A549 (cell line): ENCODE measurements at regions of chr10 and their contacts with region 1.

Region 1: GRCh38 chr10:4825851-4826665 is at the start of gene AKR1E2:
- DNase-seq: peak; percentile 98 to 99
- ATAC-seq: peak; percentile 96 to 98
- H3K4me3 ChIP-seq: peak within 1 kb of the TSS; percentile 77
- H3K27ac ChIP-seq: peak within 1 kb of the TSS; percentile 93 to 96
- H3K4me1 ChIP-seq: peaks cover 33% of the 10 kb centered on the region; the same call in 2 of the 3 replicates
- CTCF ChIP-seq: no peak
- EP300 ChIP-seq: no peak
- POLR2A ChIP-seq: peak; percentile 77
- RAD21 ChIP-seq: no peak
- polyA plus RNA-seq, gene AKR1E2: 17.5 and 20.0 TPM in 2 replicates

Region 2: DNA sequence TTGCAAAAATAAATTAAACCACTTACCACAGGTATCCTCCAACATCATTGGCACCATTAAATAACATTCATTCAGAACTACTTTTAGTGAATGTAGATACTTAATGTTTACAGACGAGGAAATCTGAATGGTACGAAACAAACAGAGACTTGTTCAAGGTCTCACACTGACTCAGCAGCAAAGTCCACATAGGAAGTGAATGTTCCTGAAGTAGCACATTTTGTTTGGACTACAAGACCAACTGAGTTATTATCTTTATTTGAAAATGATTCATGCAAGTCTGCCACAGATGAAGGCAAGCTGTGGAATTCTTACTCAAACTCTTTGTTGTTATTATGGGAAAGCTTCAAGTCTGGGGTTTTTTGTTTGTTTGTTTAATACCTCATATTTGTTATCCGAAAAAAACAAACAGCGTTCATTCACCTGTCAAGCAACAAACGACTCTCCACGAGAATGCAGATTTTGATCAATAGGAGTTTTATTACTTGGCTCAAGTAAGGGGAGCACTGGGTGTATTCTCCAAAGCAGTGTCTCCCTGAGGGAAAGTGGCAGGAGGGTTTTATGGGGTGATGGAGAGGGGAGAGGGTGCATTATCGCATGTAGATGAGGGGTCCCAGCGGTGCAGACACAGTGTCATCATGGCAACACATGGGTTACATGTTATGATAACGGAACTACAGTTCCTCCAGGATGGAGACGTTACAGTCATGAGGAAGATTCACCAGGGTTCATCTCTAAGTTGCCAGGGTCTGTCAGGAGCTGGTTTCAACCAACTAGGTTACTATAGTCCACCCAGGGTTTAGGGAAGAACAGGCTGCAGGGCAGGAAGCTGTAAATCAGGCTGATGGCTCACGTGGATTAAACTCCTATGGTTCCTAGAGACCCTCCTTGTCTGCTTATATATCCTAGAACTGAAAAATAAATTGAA is 147.8 kb before region 1 on chr10:
- CTCF ChIA-PET with region 1: no interaction called
- POLR2A ChIA-PET with region 1: no interaction called
- DNase-seq: peak; percentile 28 to 93
- ATAC-seq: peak; percentile 88 to 94
- H3K4me3 ChIP-seq: peak overlapping the region; percentile 5; the same call in 1 of the 3 replicates
- H3K27ac ChIP-seq: peak overlapping the region; percentile 86 to 87
- H3K4me1 ChIP-seq: peaks cover 46% of the 10 kb centered on the region
- CTCF ChIP-seq: no peak
- EP300 ChIP-seq: peak in 1 of 2 experiments; percentile 46; a peak in 2 of 5 replicates
- POLR2A ChIP-seq: no peak
- RAD21 ChIP-seq: no peak

Region 3: DNA sequence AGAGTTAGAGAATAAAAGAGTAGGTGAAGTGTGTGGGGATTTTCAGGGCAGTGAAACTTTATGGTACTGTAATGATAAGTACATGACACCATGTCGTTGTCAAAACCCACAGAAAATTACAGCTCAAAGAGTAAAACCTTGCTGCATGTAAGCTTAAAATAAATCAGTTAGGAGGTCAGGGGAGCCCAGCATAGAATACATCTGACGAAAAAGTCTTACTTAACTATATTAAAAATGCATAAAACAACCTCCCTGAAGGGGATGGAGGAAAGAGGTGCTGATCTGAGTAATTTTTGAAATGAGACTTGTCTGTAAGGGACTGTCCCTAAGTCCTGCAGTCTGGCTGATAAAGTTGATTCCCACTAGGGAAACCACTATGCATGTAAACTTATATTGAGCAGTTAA is 49.8 kb before region 1 on chr10:
- CTCF ChIA-PET with region 1: no interaction called
- POLR2A ChIA-PET with region 1: no interaction called
- DNase-seq: no peak
- ATAC-seq: peak in 1 of 2 experiments; percentile 35; a peak in 3 of 6 replicates
- H3K4me3 ChIP-seq: no peak overlapping the region
- H3K27ac ChIP-seq: peak overlapping the region; percentile 43 to 66
- H3K4me1 ChIP-seq: peaks cover 19% of the 10 kb centered on the region; the same call in 2 of the 3 replicates
- CTCF ChIP-seq: no peak
- EP300 ChIP-seq: no peak
- POLR2A ChIP-seq: no peak
- RAD21 ChIP-seq: no peak

Region 4: DNA sequence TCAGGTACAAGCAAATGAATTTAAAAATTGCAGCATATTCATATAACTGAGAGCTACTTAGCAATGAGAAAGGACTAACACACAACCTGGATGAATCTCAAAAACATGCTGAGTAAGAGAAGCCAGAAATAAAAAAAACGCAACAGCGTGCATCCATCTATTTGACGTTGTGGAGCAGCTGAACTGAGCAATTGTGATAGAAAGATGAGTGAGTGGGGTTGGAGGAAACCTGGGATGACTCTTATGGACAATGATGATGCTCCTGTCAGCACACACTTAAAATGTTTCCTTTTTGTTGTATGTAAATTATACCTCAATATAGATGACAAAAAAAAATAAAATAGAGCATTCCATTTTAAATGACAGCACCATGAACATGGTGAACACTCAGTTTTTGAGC is 36.0 kb before region 1 on chr10:
- CTCF ChIA-PET with region 1: no interaction called
- POLR2A ChIA-PET with region 1: no interaction called
- DNase-seq: no peak
- ATAC-seq: no peak
- H3K4me3 ChIP-seq: no peak overlapping the region
- H3K27ac ChIP-seq: no peak overlapping the region
- H3K4me1 ChIP-seq: no peaks in the 10 kb centered on the region
- CTCF ChIP-seq: no peak
- EP300 ChIP-seq: no peak
- POLR2A ChIP-seq: no peak
- RAD21 ChIP-seq: no peak

Region 5: DNA sequence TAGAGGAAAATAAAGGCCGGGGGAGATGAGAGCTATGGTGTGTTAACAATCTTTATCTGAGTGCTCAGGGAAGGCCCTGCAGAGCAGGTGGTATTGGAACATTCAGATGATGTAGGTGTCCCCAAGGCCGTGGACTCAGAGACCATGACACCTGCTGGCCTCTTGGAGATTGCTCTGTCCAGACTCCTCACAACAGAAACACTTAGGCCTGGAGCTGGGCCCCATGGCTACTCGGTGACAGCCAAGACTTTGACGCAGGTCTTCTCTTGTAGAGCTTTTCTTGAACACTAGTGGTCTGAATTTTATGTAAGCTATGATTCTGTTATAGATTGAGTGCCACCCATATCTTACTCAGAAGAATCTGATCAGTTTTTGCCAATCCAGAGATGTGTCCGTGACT is 13.3 kb after region 1 on chr10:
- CTCF ChIA-PET with region 1: interaction called, 17 read pairs
- POLR2A ChIA-PET with region 1: interaction called, 12 read pairs
- DNase-seq: peak in 1 of 2 experiments; percentile 30
- ATAC-seq: peak; percentile 71 to 72; a peak in 4 of 6 replicates
- H3K4me3 ChIP-seq: no peak overlapping the region
- H3K27ac ChIP-seq: no peak overlapping the region
- H3K4me1 ChIP-seq: no peaks in the 10 kb centered on the region
- CTCF ChIP-seq: no peak
- EP300 ChIP-seq: no peak
- POLR2A ChIP-seq: no peak
- RAD21 ChIP-seq: no peak

Region 6: DNA sequence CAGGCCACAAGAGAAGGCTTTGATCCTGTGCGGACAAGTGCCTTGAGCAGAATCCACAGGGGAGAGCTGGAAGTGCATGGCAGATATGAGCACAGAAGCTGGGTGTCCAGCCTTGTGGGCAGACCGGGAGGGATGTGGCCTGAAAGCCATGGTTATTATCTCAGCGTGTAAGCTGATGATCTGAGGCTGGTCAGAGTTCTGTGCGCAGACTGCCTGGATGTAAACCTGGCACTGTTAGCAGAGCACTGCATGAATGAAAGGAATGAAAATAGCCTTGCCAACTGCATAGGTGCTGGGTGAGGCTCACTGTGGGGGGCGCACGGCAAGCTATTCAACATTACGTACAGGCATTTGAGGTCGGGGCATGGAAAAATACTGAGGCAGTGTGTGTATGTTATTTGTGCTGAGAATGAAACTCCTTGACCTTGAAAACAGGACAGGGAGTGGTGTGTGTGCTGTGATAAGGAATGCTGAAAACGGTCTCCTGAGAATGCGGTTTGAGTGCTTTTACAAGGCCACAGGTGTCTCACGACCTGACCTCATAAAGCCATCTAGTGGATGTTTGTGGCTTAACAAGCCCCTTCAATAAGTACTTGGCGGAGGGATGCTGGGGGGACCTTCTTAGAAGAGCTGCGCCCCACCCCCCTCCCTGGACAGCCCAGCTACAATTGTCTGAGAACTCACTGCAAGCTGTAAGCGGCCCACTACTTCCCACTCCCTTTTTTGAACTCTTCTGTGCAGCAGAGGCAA is 155.8 kb after region 1 on chr10:
- CTCF ChIA-PET with region 1: interaction called, 4 read pairs
- POLR2A ChIA-PET with region 1: interaction called, 11 read pairs
- DNase-seq: peak in 1 of 2 experiments; percentile 94
- ATAC-seq: peak; percentile 1 to 7
- H3K4me3 ChIP-seq: no peak overlapping the region
- H3K27ac ChIP-seq: peak overlapping the region; percentile 81 to 93
- H3K4me1 ChIP-seq: peaks cover 81% of the 10 kb centered on the region
- CTCF ChIP-seq: peak; percentile 51
- EP300 ChIP-seq: peak in 1 of 2 experiments; percentile 42; a peak in 1 of 5 replicates
- POLR2A ChIP-seq: no peak
- RAD21 ChIP-seq: peak; percentile 70 to 72